Common myeloid progenitor, CD34-positive (primary cell): ENCODE measurements at regions of chr20 and their contacts with region 1.

Region 1: GRCh38 chr20:2663887-2664719 is at the start of gene IDH3B:
- DNase-seq: peak; percentile 96 to 98 (median 97)
- H3K4me3 ChIP-seq: peak within 1 kb of the TSS; percentile 84 to 99 (median 95)
- H3K27ac ChIP-seq: peak within 1 kb of the TSS; percentile 90 to 96
- H3K4me1 ChIP-seq: peaks cover 0 to 17% (median 13%) of the 10 kb centered on the region in 4 experiments
- H3K27me3 ChIP-seq: peaks cover 0 to 3% (median 0%) of the 10 kb centered on the region in 5 experiments

Region 2: DNA sequence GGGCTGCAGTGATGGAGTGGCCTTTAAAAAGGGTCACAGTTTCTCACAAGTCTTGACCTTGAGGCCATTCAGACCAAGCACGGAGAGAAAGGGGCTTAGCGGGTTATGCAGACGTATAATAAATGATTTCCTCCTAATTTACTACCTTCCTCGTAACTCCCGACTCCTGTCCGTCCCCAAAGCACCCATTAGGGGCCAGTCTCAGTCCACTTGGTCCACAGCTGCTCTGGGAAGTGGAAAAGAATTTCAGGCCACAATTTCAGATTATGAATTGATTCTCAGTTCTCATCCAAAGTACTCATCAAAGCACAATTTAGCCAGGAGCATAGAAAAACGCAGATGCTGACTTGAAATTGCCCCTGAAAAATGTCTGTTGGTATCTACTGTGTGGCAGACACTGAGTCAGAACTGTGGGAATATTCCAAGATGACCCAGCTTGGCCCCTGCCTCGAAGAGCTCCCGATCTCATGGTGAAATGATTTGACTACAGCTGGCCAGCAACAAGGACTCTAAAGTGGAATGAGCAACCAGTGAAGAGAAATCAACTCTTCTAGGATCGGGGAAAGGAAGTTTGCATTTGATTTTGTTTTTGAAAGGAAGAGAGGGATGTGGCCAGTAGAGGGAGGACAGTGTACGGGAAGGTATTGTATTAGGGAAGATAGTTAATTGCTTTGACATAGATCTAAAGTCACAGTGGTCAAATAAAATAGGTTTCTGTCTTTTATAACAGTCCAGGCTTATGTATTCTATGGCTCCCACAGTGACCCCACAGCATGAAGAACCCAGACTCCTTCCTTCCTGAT is 577.7 kb before region 1 on chr20:
- CTCF ChIA-PET with region 1: no interaction called
- POLR2A ChIA-PET with region 1: no interaction called
- DNase-seq: no peak
- H3K4me3 ChIP-seq: no peak overlapping the region
- H3K27ac ChIP-seq: no peak overlapping the region
- H3K4me1 ChIP-seq: peaks cover 0 to 4% (median 0%) of the 10 kb centered on the region in 4 experiments
- H3K27me3 ChIP-seq: peaks cover 0 to 21% (median 6%) of the 10 kb centered on the region in 5 experiments

Region 3: DNA sequence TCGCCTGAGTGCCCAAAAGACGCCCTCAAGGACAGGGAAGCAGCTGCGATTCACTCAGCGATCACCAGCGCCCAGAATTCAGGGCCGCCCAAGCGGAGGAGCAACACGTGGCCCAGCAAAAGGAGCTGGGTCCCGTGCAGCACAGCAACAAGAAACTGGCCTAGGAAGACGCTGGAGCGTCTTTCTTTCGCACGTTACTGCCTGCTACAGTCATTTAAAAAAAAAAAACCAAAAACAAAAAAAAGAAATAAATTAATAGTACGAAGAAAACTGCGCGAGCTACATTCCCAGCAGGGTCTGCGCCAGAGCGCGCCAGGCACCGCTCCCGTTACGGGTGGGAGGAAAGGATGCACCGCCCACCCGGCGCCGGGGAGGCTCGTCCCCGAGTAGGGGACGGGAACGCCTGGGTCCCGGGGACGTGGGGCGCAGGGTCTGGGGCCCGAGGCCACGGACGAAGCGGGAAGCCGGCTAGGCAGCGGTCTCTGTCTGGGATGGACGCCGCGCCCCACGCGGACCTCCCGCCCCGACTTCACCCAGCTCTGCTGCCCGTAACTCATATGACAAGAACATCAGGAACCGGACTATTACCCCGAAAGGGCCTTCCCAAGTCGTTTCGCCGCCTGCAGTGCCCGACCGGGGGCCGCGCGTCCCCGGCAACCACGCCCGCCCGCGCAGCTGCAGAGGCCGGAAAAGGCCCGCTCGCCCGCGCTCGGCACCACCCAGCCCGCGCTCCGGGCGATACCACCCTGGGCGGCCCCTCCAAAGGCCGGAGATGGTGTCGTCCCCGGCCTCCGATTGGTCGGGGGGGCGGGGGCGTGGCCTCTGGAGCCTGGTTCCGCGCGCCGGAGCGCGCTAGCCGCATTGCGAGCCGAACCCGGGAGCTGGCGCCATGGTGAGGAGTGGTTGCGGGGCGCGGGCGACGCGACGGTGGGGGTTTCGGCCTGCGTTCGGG is 12.1 kb before region 1 on chr20 and contains the start of gene NOP56:
- CTCF ChIA-PET with region 1: interaction called, 10 read pairs
- POLR2A ChIA-PET with region 1: interaction called, 23 read pairs
- DNase-seq: peak; percentile 92 to 96 (median 96)
- H3K4me3 ChIP-seq: peak within 1 kb of the TSS; percentile 86 to 99 (median 91)
- H3K27ac ChIP-seq: peak within 1 kb of the TSS; percentile 56 to 88
- H3K4me1 ChIP-seq: peaks cover 10 to 35% (median 27%) of the 10 kb centered on the region in 4 experiments
- H3K27me3 ChIP-seq: no peaks in the 10 kb centered on the region

Region 4: DNA sequence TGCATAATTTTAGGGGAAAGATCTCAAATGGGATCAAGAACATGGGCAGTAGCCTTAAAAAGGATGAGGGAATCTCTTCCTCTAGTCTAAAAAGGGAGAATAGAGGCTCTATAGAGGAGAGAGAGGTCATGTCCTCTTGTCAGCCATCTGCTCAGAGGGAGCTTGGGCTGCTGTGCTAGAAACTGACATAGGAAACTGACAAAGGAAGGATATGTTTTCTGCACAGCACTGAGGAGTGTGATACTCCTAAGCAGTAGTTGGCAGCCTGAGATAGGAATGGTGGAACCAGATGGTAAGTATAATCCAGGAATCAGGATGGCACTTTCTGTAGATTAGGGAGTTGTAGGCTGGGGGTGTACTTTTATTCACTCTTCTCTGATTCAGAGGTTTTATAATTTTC is 268.4 kb after region 1 on chr20:
- CTCF ChIA-PET with region 1: no interaction called
- POLR2A ChIA-PET with region 1: no interaction called
- DNase-seq: no peak
- H3K4me3 ChIP-seq: no peak overlapping the region
- H3K27ac ChIP-seq: no peak overlapping the region
- H3K4me1 ChIP-seq: peaks cover 0 to 4% (median 0%) of the 10 kb centered on the region in 4 experiments
- H3K27me3 ChIP-seq: no peaks in the 10 kb centered on the region